Sigmoid colon (tissue), 7 donors: ENCODE measurements at regions of chr19 and their contacts with region 1.

Region 1: DNA sequence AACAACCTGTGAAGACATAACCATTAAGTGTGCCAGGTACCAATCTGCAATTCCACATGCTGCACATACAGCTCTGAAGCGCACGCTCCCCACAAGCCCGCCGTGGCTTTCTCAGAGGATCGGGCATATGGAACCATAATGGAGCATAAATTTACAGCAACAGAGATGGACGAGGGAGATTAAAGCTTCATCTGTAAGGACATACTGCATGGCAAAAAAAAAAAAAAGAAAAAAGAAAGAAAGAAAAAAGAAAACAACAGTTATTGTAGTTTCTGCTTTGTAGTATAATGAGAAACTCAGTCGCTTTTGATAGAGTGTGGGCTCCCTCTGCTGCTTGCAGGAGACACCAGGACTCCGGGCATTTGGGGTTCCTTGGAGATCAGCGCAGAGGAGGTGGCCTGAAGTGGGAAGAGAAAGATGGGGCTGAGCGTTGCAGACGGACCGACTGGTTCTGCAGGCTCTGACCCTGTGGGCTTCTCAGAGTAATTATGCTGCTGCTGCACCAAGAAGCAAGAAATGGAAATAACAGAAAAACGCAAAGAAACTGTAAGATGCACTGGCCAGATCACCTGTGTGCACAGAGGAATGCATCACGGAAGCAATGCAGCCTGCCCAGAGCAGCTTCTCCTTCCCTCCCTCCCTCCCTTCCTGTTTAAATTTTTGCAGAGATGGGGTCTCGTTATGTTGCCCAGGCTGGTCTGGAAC is 10.8 kb upstream of the PDCD5 start:
- DNase-seq: peak; percentile 69
- H3K4me3 ChIP-seq: no peak overlapping the region
- H3K27ac ChIP-seq: no peak overlapping the region
- H3K4me1 ChIP-seq: no peaks in the 10 kb centered on the region
- H3K27me3 ChIP-seq: no peaks in the 10 kb centered on the region
- CTCF ChIP-seq: peak in 2 of 4 experiments; percentile 47 to 49
- EP300 ChIP-seq: no peak
- POLR2A ChIP-seq: no peak

Region 2: DNA sequence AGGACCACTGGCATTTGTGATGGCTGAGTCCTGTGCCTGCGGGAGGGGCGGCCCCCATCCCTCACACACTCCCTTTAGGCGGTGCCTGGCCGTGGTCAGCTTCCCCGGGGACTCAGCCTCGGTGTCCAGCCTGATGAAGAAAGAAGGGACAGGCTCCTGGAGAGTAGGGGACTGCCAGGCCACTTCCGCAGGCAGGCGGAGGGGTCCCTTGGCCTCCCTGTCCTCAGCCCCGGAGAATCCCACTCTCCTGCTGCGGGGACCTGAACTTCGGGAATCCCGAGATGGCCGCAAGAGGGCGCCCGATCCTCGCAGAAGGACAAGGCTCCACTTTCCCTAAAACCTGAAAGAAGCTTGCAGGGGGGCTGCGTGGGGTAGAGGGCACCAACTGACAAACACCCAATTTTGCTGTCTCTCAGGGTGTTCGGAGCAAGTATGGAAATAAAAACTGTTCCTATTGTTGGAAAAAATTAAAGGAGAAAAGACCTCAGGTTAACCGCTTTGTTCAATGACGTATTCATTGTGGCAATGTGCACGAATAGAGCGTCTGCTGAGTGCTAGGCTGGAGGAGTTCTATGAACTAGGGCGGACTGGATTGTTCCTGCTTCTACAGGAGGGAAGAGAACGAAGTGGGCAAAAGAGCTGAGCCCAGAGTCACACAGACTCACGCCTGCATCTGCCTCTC is 1900.8 kb before region 1 on chr19:
- intact Hi-C with region 1: loop called (anchors 10 kb)
- DNase-seq: peak; percentile 75
- H3K4me3 ChIP-seq: no peak overlapping the region
- H3K27ac ChIP-seq: no peak overlapping the region
- H3K4me1 ChIP-seq: peaks cover 0 to 13% (median 8%) of the 10 kb centered on the region in 4 donors
- H3K27me3 ChIP-seq: peaks cover 3 to 29% (median 20%) of the 10 kb centered on the region in 3 donors
- CTCF ChIP-seq: peak; percentile 31 to 81 (median 60)
- EP300 ChIP-seq: no peak
- POLR2A ChIP-seq: no peak

Region 3: GRCh38 chr19:32287811-32288227 is 282.4 kb before region 1 on chr19:
- intact Hi-C with region 1: loop called (anchors 2 kb)
- DNase-seq: peak; percentile 79
- H3K4me3 ChIP-seq: peak overlapping the region in 3 of 4 donors; percentile 23 to 33 (median 26)
- H3K27ac ChIP-seq: peak overlapping the region in 1 of 4 donors; percentile 42
- H3K4me1 ChIP-seq: peaks cover 0 to 15% (median 9%) of the 10 kb centered on the region in 4 donors
- H3K27me3 ChIP-seq: no peaks in the 10 kb centered on the region
- CTCF ChIP-seq: peak; percentile 28 to 64 (median 52)
- EP300 ChIP-seq: no peak
- POLR2A ChIP-seq: no peak

Region 4: DNA sequence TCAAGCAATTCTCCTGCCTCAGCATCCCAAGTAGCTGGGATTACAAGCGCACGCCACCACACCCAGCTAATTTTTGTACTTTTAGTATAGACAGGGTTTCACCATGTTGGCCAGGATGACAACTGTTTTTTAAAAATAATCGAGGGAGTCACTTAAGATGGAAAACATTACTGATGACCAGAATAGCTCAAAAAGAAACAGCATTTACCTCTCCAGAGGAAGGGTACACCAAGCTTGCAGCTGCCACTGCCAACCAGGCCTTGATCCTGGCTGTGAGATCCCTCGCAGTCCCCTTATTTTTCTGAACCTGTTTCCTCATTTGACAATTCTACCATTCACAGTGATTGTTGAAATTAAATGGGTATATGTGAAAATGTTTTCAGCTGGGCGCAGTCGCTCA is 25.3 kb after region 1 on chr19:
- intact Hi-C with region 1: no loop called
- DNase-seq: no peak
- H3K4me3 ChIP-seq: no peak overlapping the region
- H3K27ac ChIP-seq: no peak overlapping the region
- H3K4me1 ChIP-seq: no peaks in the 10 kb centered on the region
- H3K27me3 ChIP-seq: no peaks in the 10 kb centered on the region
- CTCF ChIP-seq: no peak
- EP300 ChIP-seq: no peak
- POLR2A ChIP-seq: no peak